Heart right ventricle (tissue), 16 donors: ENCODE measurements at regions of chr4 and their contacts with region 1.

Region 1: DNA sequence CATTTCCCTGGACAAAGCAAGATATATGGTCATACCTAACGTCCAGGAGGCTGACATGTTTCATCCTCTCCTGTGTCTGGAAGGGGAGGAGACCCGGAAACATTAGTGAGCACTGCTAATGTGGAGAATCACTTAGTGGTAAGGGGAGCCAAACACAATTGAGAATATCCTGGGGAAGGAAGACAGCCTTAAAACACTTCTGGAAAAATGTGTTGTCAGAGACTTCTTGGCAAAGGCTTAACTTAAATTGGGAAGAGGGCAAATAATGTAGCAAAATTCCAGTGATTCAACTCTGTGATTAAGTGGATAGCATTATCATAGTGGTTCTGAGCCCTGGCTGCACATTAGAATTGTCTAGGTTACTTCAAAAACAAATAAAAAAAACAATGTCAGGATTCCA is 39.5 kb downstream of the SPARCL1 start:
- DNase-seq: peak in 1 of 2 donors; percentile 48
- ATAC-seq: peak; percentile 78 to 96 (median 91)
- H3K4me3 ChIP-seq: no peak overlapping the region
- H3K27ac ChIP-seq: peak overlapping the region; percentile 51 to 80 (median 70)
- H3K4me1 ChIP-seq: peaks cover 5 to 56% (median 26%) of the 10 kb centered on the region in 9 donors
- H3K27me3 ChIP-seq: no peaks in the 10 kb centered on the region
- CTCF ChIP-seq: no peak

Region 2: DNA sequence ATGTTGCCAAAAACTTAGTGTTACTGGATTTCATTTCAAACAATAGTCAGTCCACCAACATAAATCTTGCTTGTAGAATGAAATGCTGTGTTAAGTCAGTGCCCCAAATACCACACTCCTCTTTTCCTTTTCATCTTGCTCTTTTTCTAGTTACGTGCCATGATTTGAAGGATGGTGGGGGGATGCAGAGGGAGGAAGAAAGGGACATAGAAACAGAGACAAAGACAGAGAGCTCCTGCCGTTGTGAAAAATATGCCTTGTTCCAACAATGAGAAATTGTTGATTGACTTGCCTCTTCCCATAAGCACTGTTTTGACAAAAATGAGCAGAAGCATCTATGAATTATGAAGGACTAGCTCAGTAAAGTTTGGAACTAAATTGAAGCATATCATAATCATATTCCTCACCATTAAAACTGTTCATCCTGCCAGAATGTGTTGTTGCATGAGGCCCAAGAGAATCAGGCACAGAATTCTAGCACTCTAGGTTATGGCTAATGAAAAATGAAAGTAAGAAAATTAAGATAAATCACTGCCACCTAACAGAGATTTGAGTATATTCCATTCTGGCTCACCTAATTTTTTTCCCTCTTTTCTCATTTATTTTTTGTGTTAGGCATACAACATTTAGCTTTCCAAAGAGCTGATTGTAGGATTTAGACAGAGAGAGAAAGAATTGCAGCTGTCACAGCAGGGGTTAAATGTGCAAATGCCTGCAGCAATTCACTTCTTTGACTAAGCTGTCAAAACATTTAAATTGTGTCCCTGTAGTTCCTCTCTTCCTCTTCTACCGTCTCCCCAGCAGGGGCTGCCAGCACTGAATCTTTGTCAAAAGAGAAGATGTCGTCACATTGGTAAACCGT is 1007.1 kb before region 1 on chr4:
- intact Hi-C with region 1: no loop called
- DNase-seq: no peak
- ATAC-seq: peak in 1 of 8 donors; percentile 38
- H3K4me3 ChIP-seq: peak overlapping the region in 5 of 10 donors; percentile 1 to 36 (median 19)
- H3K27ac ChIP-seq: no peak overlapping the region
- H3K4me1 ChIP-seq: peaks cover 0 to 4% (median 0%) of the 10 kb centered on the region in 9 donors
- H3K27me3 ChIP-seq: no peaks in the 10 kb centered on the region
- CTCF ChIP-seq: peak in 1 of 9 donors; percentile 16

Region 3: DNA sequence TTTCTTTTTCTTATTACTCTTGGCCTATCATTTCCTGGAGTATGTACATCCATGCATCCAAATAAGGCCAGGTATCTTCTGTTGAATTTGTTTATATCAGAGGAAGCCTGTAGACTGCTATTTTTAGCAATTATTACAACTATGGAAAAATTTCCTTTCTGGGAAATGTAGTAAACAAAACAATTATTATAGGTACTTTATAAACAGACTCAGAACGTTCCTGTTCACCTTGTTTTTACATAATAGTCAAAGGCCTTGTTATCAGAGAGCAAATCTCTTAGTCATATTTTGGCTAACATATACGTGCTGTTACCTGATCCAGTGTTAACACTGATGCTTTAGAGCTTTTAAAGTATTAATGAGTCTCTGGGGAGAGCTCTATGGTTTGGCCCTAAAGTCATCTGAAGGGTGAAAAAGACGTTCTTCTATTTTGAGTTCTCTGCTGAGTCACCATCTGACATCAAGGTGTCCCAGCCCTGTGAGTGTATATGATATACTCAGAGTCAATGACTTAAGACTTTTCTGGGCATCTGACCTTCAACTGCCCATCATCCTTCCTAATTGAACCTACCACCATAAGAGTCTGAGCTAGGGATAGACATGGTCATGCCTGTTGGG is 32.2 kb after region 1 on chr4:
- intact Hi-C with region 1: loop called in 3 of 10 experiments (anchors 1 to 5 kb)
- DNase-seq: no peak
- ATAC-seq: peak in 7 of 8 donors; percentile 16 to 69 (median 41)
- H3K4me3 ChIP-seq: peak overlapping the region in 3 of 10 donors; percentile 4 to 28 (median 14)
- H3K27ac ChIP-seq: peak overlapping the region; percentile 69 to 93 (median 84)
- H3K4me1 ChIP-seq: peaks cover 11 to 94% (median 67%) of the 10 kb centered on the region in 9 donors
- H3K27me3 ChIP-seq: no peaks in the 10 kb centered on the region
- CTCF ChIP-seq: no peak

Region 4: GRCh38 chr4:87824352-87824751 is 334.7 kb after region 1 on chr4:
- intact Hi-C with region 1: loop called in 1 of 10 experiments (anchors 5 kb)
- DNase-seq: no peak
- ATAC-seq: no peak
- H3K4me3 ChIP-seq: no peak overlapping the region
- H3K27ac ChIP-seq: no peak overlapping the region
- H3K4me1 ChIP-seq: no peaks in the 10 kb centered on the region
- H3K27me3 ChIP-seq: no peaks in the 10 kb centered on the region
- CTCF ChIP-seq: no peak